ENCODE measurements at regions of chr18 and their contacts with region 1.

Region 1: DNA sequence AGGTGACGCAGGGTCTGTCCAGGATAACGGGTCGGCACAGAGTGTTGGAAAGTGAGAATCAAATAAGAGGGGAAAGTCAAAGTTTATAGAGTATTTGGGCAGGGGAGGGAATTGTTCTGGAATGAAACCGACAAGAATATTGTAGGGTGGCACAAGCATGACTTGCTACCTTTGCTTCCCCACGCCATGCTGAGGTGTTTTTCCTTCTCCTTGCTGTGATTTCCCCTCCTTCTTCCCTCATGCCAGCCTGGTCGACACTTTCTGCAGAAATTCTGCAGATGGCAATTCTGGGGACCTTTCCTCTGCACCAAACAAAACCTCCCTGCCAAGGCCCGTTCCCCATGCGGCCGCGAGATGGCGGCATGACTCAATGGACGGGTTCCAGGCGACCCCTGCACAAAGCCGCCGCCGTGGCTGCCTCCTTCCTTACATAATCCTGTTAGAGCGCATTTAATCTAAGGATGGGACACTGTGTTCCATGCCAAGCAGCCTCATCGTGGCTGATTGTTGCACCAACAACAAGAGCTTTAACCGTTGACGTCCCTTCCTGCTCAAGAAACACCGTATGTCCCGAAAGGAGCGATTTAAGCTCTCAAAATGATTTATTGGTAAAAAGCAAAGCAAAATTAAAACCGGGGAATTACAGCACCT is at the start of gene MRO:
- DNase-seq: peak; percentile 61 to 83 (median 69)
- H3K4me3 ChIP-seq: peak within 1 kb of the TSS; percentile 72
- H3K4me3 Mint-ChIP-seq: peak within 1 kb of the TSS in 1 of 7 donors; percentile 51
- H3K27ac ChIP-seq: no peak within 1 kb of the TSS
- H3K27ac Mint-ChIP-seq: peak within 1 kb of the TSS in 1 of 8 donors; percentile 11
- H3K4me1 ChIP-seq: peaks cover 19% of the 10 kb centered on the region
- H3K4me1 Mint-ChIP-seq: no peaks in the 10 kb centered on the region
- H3K27me3 ChIP-seq: no peaks in the 10 kb centered on the region
- H3K27me3 Mint-ChIP-seq: peaks cover 0 to 24% of the 10 kb centered on the region in 2 donors
- total RNA-seq, gene MRO: 0.18 TPM in 1 of 2 experiments, not detected in the other

Region 2: DNA sequence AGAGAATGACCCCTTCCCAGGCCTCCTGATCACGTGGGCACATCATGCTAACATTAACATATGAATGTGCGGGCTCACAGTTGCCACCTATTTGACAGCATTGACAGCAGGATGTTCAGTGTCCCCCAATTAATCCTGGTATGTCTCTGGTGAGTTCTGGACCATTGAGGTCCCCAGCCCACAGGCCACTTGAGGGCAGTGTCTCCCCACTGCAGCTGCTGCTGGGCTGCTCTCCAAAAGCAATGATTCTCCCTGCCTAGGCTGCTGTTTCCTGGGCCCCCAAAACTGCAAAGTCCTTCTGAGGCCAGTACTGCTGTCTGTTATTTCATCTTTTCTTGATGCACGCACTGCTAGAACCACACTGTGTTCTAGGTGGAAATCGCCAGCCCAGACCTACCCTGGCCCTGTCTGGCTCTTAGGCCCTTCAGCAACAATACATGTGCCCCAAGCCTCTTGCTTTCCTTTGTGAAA is 312.7 kb before region 1 on chr18:
- CTCF ChIA-PET with region 1: no interaction called
- POLR2A ChIA-PET with region 1: no interaction called
- DNase-seq: no peak
- H3K4me3 ChIP-seq: no peak overlapping the region
- H3K4me3 Mint-ChIP-seq: no peak overlapping the region
- H3K27ac ChIP-seq: no peak overlapping the region
- H3K27ac Mint-ChIP-seq: no peak overlapping the region
- H3K4me1 ChIP-seq: no peaks in the 10 kb centered on the region
- H3K4me1 Mint-ChIP-seq: no peaks in the 10 kb centered on the region
- H3K27me3 ChIP-seq: no peaks in the 10 kb centered on the region
- H3K27me3 Mint-ChIP-seq: peaks cover 5 to 36% of the 10 kb centered on the region in 2 donors

Region 3: DNA sequence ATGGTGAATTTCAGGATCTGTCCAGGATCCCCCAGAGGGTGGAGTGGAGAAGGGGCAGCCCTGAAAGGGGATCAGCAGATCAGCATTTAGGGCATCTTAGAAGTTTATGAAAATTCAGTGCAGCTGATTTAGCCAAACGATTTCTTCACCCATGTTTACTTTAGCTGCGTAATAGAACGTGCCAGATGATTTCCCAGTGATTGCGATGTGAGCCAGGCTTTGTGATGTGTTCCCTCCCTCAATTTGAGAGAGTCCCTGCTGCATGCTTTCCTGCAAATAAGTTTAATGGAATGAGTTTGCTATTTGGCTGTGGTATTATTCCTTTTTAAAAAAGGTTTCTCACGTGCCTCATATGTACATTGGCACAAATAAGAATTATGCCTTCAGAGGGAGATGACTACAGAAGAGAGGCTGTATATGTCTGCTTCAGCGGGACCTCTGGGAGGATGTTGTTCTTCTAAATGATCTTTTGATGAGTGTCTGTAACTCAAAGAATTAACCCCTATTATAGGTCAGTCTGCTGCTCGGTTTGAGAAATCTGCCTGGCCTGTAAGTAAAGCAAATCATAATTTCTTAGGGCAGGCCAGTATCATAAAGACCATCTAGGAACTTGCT is 111.9 kb before region 1 on chr18:
- CTCF ChIA-PET with region 1: no interaction called
- POLR2A ChIA-PET with region 1: no interaction called
- DNase-seq: no peak
- H3K4me3 ChIP-seq: no peak overlapping the region
- H3K4me3 Mint-ChIP-seq: no peak overlapping the region
- H3K27ac ChIP-seq: no peak overlapping the region
- H3K27ac Mint-ChIP-seq: no peak overlapping the region
- H3K4me1 ChIP-seq: no peaks in the 10 kb centered on the region
- H3K4me1 Mint-ChIP-seq: no peaks in the 10 kb centered on the region
- H3K27me3 ChIP-seq: no peaks in the 10 kb centered on the region
- H3K27me3 Mint-ChIP-seq: peaks cover 0 to 4% of the 10 kb centered on the region in 2 donors

Region 4: GRCh38 chr18:51053814-51054213 is 234.0 kb after region 1 on chr18:
- CTCF ChIA-PET with region 1: interaction called, 10 read pairs
- POLR2A ChIA-PET with region 1: no interaction called
- DNase-seq: no peak
- H3K4me3 ChIP-seq: no peak overlapping the region
- H3K4me3 Mint-ChIP-seq: peak overlapping the region in 5 of 7 donors; percentile 10 to 61 (median 30)
- H3K27ac ChIP-seq: no peak overlapping the region
- H3K27ac Mint-ChIP-seq: peak overlapping the region; percentile 1 to 89 (median 79)
- H3K4me1 ChIP-seq: peaks cover 12% of the 10 kb centered on the region
- H3K4me1 Mint-ChIP-seq: peaks cover 31 to 57% (median 53%) of the 10 kb centered on the region in 3 donors
- H3K27me3 ChIP-seq: no peaks in the 10 kb centered on the region
- H3K27me3 Mint-ChIP-seq: no peaks in the 10 kb centered on the region